CD4-positive, alpha-beta T cell (primary cell): ENCODE measurements at regions of chr17 and their contacts with region 1.

Region 1: DNA sequence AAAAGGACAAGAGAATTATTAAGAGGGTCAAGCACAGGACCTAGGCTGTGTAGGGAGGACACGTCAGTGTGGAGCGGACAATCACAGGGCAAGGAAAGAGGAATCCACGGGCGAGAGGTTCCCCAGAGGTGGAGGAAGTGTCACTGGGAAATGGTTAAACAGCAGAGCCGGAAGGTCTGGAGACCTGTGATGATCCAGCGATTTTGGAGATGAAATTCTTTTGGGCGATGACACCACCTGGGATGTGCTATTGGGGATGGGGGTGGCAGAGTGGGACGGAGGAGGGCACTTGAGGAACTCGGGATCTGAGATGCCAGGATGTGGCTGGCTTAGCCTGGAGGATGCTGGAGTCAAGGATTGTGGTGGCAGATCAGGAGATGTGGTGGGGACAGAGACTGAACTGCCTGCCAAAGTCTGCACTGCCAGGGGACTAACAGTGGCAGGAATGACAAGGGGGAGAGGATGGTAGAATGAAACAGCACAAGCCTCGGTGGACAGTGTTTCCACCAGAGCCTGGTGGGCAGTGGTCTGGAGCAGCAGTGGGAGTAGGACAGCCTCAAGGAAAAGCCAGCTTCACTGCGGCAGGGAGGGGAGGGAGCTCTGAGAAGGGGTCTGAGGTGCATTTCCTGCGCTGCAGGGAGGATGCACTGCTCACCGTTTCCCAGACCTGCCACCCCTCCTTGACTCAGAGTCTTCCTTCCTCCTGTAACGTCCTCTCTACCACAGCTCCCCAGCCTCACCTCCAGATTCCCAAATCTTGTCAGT is 34.0 kb downstream of the MARCHF10 start:
- DNase-seq: no peak
- ATAC-seq: no peak
- H3K4me3 ChIP-seq: no peak overlapping the region
- H3K4me3 Mint-ChIP-seq: no peak overlapping the region
- H3K27ac ChIP-seq: no peak overlapping the region
- H3K27ac Mint-ChIP-seq: no peak overlapping the region
- H3K4me1 ChIP-seq: no peaks in the 10 kb centered on the region
- H3K4me1 Mint-ChIP-seq: no peaks in the 10 kb centered on the region
- H3K27me3 ChIP-seq: peaks cover 0 to 2% of the 10 kb centered on the region in 2 experiments
- H3K27me3 Mint-ChIP-seq: peaks cover 16% of the 10 kb centered on the region
- CTCF ChIP-seq: no peak

Region 2: GRCh38 chr17:62804794-62805180 is 30.6 kb after region 1 on chr17:
- CTCF ChIA-PET with region 1: no interaction called
- POLR2A ChIA-PET with region 1: no interaction called
- intact Hi-C with region 1: loop called in 1 of 2 experiments (anchors 2 kb)
- DNase-seq: no peak
- ATAC-seq: no peak
- H3K4me3 ChIP-seq: no peak overlapping the region
- H3K4me3 Mint-ChIP-seq: no peak overlapping the region
- H3K27ac ChIP-seq: no peak overlapping the region
- H3K27ac Mint-ChIP-seq: no peak overlapping the region
- H3K4me1 ChIP-seq: peaks cover 6% of the 10 kb centered on the region
- H3K4me1 Mint-ChIP-seq: no peaks in the 10 kb centered on the region
- H3K27me3 ChIP-seq: peaks cover 14 to 21% of the 10 kb centered on the region in 2 experiments
- H3K27me3 Mint-ChIP-seq: peaks cover 59% of the 10 kb centered on the region
- CTCF ChIP-seq: no peak